Activated CD4-positive, alpha-beta T cell treated with anti-CD3 and anti-CD28 coated beads for 36 hours (primary cell): ENCODE measurements at regions of chr9 and their contacts with region 1.

Region 1: GRCh38 chr9:34899535-34900158 is 58.4 kb upstream of the PHF24 start:
- DNase-seq: peak; percentile 90
- ATAC-seq: peak; percentile 100
- H3K4me3 Mint-ChIP-seq: no peak overlapping the region
- H3K27ac Mint-ChIP-seq: no peak overlapping the region
- H3K4me1 Mint-ChIP-seq: no peaks in the 10 kb centered on the region
- H3K27me3 Mint-ChIP-seq: peaks cover 30% of the 10 kb centered on the region

Region 2: GRCh38 chr9:33426843-33427293 is 1472.8 kb before region 1 on chr9:
- CTCF ChIA-PET with region 1: no interaction called
- POLR2A ChIA-PET with region 1: no interaction called
- intact Hi-C with region 1: no loop called
- DNase-seq: peak; percentile 22
- ATAC-seq: peak; percentile 64
- H3K4me3 Mint-ChIP-seq: no peak overlapping the region
- H3K27ac Mint-ChIP-seq: no peak overlapping the region
- H3K4me1 Mint-ChIP-seq: peaks cover 7% of the 10 kb centered on the region
- H3K27me3 Mint-ChIP-seq: no peaks in the 10 kb centered on the region

Region 3: GRCh38 chr9:34458013-34458958 is 441.4 kb before region 1 on chr9 and contains the starts of genes DNAI1 and FAM219A:
- CTCF ChIA-PET with region 1: no interaction called
- POLR2A ChIA-PET with region 1: no interaction called
- intact Hi-C with region 1: no loop called
- DNase-seq: peak; percentile 99
- ATAC-seq: peak; percentile 92
- H3K4me3 Mint-ChIP-seq: peak within 1 kb of the TSS; percentile 84
- H3K27ac Mint-ChIP-seq: peak within 1 kb of the TSS; percentile 75
- H3K4me1 Mint-ChIP-seq: peaks cover 45% of the 10 kb centered on the region
- H3K27me3 Mint-ChIP-seq: peaks cover 9% of the 10 kb centered on the region
- total RNA-seq, gene DNAI1: 0.34 TPM in 1 of 2 experiments, not detected in the other
- total RNA-seq, gene FAM219A: 9.7 to 12.9 TPM

Region 4: DNA sequence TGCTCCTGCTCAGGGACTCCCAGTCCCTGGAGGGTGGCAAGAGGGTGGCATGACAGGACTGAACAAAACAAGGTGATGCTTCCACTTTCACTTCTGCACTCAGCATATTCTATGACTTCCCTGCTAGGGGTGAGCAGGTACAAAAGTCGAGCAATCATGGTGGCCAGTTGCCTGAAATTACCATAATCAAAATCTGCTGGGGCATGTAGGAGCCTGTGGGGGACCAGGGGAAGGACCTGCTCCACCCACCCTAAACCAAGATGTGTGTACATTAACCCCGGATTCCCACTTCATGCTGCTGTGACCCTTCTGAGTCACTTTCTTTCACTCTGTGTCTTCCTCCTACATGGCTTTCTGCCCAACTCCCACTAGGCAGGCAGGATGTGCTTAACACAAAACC is 14.9 kb before region 1 on chr9:
- CTCF ChIA-PET with region 1: interaction called, 37 read pairs
- POLR2A ChIA-PET with region 1: no interaction called
- intact Hi-C with region 1: no loop called
- DNase-seq: peak; percentile 63
- ATAC-seq: peak; percentile 92
- H3K4me3 Mint-ChIP-seq: peak overlapping the region; percentile 7
- H3K27ac Mint-ChIP-seq: peak overlapping the region; percentile 72
- H3K4me1 Mint-ChIP-seq: no peaks in the 10 kb centered on the region
- H3K27me3 Mint-ChIP-seq: peaks cover 6% of the 10 kb centered on the region

Region 5: DNA sequence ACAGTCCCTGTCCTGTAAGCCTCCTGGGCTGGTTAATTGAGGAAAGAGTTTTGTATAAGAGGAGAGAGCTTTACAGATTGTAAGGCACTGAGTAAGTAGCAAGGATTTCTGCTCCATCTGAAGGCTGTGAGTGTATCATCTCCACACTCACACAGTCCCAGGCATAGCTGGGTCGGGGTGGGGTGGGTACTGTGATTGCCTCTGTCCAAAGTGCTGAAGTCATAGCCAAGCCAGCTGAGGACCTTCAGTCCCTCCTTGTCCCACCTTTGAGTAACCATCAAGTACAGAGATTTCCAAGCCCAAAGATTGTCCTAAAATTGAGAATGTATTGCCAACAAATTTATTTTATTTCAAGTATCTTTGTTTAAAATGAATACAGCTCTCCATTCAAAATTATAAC is 84.4 kb after region 1 on chr9:
- CTCF ChIA-PET with region 1: interaction called, 43 read pairs
- POLR2A ChIA-PET with region 1: no interaction called
- intact Hi-C with region 1: loop called (anchors 1 kb)
- DNase-seq: peak; percentile 61
- ATAC-seq: no peak
- H3K4me3 Mint-ChIP-seq: no peak overlapping the region
- H3K27ac Mint-ChIP-seq: no peak overlapping the region
- H3K4me1 Mint-ChIP-seq: peaks cover 66% of the 10 kb centered on the region
- H3K27me3 Mint-ChIP-seq: no peaks in the 10 kb centered on the region

Region 6: DNA sequence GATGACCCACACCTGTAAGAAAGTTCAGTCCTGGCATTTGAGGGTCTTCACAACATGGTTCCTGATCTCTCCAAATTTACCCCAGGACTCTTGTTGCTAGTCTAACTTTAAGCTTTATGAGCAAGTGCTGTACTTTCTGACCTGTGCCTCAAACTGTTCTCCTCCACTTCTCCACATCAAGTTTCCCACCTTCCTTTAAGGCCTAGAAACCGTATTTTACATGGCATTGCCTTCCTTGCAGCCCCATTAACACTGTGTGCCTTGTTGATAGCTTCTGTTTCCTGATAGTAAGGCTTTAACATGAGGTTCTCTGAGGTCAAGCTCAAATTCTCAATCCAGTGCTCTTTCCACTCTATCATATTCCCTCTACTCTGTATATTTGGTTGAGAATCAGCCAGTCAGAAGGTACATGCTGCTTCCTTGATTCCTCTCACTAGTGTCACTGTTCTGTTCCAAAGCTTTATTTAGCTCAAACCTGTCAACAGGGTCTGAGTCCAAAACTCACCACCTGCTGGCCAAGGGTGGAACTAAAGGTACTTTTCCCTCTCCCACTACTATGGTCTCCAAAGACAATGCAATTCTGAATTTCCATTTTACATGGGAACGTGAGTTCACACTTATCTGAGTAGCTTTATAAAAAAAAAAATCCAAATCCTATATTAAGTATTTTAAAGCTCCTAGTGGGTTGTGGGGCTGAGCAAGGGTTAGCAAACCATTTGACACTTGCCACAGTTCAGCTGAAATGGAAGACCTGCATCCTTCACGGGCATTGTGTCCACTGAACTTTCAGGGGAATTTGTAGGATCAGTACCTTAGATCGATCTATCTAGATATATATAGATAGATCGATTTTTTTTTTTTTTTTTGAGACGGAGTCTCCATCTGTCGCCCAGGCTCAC is 151.7 kb after region 1 on chr9:
- CTCF ChIA-PET with region 1: interaction called, 67 read pairs
- POLR2A ChIA-PET with region 1: interaction called, 4 read pairs
- intact Hi-C with region 1: loop called (anchors 1 kb)
- DNase-seq: peak; percentile 76
- ATAC-seq: peak; percentile 87
- H3K4me3 Mint-ChIP-seq: no peak overlapping the region
- H3K27ac Mint-ChIP-seq: peak overlapping the region; percentile 15
- H3K4me1 Mint-ChIP-seq: no peaks in the 10 kb centered on the region
- H3K27me3 Mint-ChIP-seq: no peaks in the 10 kb centered on the region

Region 7: DNA sequence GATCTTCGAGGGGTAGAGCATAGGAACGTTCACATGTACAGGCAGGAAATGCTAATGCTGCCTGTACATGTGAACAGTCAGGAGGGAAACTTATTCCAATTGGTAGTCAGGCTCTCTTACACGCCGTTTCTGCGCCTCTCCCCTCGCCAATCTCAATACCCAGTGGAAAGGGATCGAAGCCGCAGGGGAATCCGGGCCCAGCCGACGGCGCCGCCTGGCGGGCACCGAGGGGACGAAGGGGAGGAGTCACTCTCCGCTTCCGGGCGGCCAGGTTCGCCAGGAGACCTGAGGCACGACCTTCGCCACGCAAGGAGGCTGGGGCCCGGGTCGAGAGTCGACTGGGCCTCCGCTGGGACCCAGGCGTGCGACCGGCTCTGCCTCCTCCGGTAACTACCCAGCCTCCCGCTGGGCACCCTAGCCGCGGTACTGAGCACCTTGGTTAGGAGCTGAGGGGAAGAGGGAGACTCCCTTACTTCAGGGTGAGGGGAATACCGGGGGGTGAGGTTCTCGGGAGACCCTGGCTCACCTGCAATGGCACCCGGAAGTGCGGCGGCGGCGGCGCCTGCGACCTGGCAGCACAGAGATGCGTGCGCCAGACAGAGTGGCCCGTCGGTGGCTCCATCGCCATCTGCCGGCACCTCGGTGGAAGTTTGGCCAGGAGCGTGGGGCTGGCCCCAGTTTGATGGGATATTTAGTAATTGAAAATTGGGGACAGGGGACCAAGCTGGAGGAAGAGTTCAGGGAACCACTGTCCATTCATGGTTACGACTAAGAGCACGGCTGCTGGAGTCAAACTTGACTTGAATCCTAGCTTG is 196.6 kb after region 1 on chr9 and contains the start of gene PIGO:
- CTCF ChIA-PET with region 1: interaction called, 20 read pairs
- POLR2A ChIA-PET with region 1: interaction called, 3 read pairs
- intact Hi-C with region 1: loop called (anchors 1 kb)
- DNase-seq: peak; percentile 95
- ATAC-seq: peak; percentile 91
- H3K4me3 Mint-ChIP-seq: peak within 1 kb of the TSS; percentile 85
- H3K27ac Mint-ChIP-seq: peak within 1 kb of the TSS; percentile 92
- H3K4me1 Mint-ChIP-seq: peaks cover 25% of the 10 kb centered on the region
- H3K27me3 Mint-ChIP-seq: no peaks in the 10 kb centered on the region
- total RNA-seq, gene PIGO: 21.0 to 27.2 TPM

Region 8: GRCh38 chr9:35481347-35481975 is 581.8 kb after region 1 on chr9:
- CTCF ChIA-PET with region 1: interaction called, 7 read pairs
- POLR2A ChIA-PET with region 1: no interaction called
- intact Hi-C with region 1: loop called (anchors 1 kb)
- DNase-seq: peak; percentile 46
- ATAC-seq: peak; percentile 78
- H3K4me3 Mint-ChIP-seq: no peak overlapping the region
- H3K27ac Mint-ChIP-seq: no peak overlapping the region
- H3K4me1 Mint-ChIP-seq: no peaks in the 10 kb centered on the region
- H3K27me3 Mint-ChIP-seq: peaks cover 3% of the 10 kb centered on the region